Colonic mucosa (tissue), 4 donors: ENCODE measurements at regions of chr11 and their contacts with region 1.

Region 1: DNA sequence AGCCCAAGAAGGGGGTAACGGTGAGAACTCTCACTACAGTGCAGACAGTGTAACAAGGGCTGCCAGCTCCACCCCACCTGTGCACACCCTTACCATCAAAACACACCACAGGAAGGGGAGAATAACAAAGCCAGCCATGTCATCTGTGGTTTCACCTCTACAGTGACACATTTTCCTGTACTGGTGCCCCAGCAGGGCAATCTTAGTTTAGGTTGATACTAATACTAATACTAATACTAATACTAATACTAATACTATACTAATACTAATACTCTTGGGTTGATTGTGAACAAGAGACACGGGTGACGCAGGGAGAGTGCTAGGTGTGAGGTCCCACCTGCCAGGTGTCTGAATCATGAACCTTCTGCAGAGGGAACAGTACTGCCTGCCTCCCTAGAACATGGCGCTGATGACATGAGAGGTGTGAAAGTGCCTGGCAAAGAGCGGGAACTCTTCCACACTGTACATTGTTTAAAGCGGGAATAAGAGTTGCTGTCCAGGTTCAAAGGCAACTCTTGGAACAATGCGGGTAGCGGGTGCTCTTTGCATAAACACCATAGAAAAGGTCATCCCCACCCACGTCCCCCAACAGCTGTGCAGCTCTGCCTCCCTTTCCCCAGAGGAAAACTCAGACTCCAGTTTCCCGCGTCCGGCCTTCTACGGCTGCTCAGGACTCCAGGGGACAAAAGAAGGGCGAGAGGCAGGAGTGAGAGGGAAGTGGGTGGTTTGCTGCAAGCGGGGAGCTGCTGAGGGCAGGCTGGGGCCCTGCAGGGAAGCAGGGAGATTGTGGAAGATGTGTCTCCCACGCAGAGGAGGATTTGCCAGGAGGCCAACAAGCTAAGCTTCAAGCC is 25.0 kb upstream of the TMPRSS4 start:
- DNase-seq: no peak
- H3K4me3 ChIP-seq: no peak overlapping the region
- H3K27ac ChIP-seq: no peak overlapping the region
- H3K4me1 ChIP-seq: no peaks in the 10 kb centered on the region
- H3K27me3 ChIP-seq: no peaks in the 10 kb centered on the region
- CTCF ChIP-seq: no peak

Region 2: GRCh38 chr11:117443266-117444195 is 608.3 kb before region 1 on chr11:
- intact Hi-C with region 1: loop called (anchors 10 kb)
- DNase-seq: peak; percentile 27
- H3K4me3 ChIP-seq: no peak overlapping the region
- H3K27ac ChIP-seq: no peak overlapping the region
- H3K4me1 ChIP-seq: no peaks in the 10 kb centered on the region
- H3K27me3 ChIP-seq: no peaks in the 10 kb centered on the region
- CTCF ChIP-seq: no peak

Region 3: DNA sequence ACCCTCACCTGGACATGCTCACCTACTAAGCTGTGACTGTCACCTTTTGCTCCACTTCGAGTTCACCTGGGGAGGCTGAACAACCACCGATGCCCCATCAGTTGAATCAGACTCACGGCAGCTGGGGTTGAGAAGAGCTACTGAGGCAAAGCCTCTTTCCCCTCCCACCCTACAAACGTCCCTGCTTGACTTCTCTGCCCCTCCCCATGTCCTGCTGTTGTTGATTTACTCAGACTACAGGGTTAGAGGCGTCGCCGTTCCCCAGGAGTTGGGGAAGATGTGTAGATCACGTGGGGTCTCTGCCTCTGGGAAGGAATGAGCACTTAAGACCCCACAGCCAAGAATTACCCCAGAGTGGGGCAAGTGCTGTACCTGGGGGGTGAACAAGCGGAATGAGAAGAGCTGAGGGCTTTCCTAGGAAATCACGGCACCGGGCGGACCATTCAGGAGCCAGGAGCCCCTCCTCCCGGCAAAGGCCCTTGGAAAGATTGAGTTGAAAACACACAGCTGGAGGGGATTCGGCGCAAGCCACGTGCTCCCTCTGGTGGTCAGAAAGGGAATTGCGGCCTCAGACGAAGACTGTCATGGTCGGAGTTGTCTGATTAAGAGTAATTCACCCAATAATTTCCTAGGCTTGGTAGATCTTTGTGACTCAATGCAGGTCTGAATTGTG is 234.3 kb before region 1 on chr11:
- intact Hi-C with region 1: loop called (anchors 5 kb)
- DNase-seq: peak; percentile 90
- H3K4me3 ChIP-seq: no peak overlapping the region
- H3K27ac ChIP-seq: peak overlapping the region; percentile 67
- H3K4me1 ChIP-seq: peaks cover 18% of the 10 kb centered on the region
- H3K27me3 ChIP-seq: no peaks in the 10 kb centered on the region
- CTCF ChIP-seq: peak; percentile 99

Region 4: GRCh38 chr11:117843666-117844484 is 208.0 kb before region 1 on chr11:
- intact Hi-C with region 1: loop called (anchors 5 kb)
- DNase-seq: peak; percentile 86
- H3K4me3 ChIP-seq: no peak overlapping the region
- H3K27ac ChIP-seq: no peak overlapping the region
- H3K4me1 ChIP-seq: no peaks in the 10 kb centered on the region
- H3K27me3 ChIP-seq: no peaks in the 10 kb centered on the region
- CTCF ChIP-seq: peak; percentile 99

Region 5: GRCh38 chr11:117946842-117947526 is 104.9 kb before region 1 on chr11:
- intact Hi-C with region 1: loop called (anchors 5 kb)
- DNase-seq: peak; percentile 89
- H3K4me3 ChIP-seq: no peak overlapping the region
- H3K27ac ChIP-seq: no peak overlapping the region
- H3K4me1 ChIP-seq: no peaks in the 10 kb centered on the region
- H3K27me3 ChIP-seq: no peaks in the 10 kb centered on the region
- CTCF ChIP-seq: peak; percentile 98